ENCODE measurements at regions of chr12 and their contacts with region 1.

Region 1: DNA sequence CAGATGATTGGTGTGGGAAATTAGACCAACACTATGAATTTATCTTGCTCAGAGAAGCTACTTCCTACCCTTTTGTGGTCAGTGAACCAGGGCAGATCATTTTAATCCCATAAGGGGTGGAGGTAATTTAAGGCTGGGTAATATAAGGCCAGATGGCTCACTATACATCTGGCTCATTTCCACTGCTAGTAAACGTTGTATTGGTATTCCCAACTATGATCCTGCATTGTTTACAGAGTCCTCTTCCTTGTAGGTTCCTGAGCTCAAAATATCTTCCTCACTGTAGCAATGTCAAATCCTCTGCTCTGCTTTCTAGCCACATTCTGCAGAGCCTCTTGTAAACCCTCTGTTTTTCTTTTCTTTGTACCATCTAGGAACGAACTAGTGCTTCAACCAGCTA is 93.0 kb upstream of the MGAT4C start:
- DNase-seq: no peak
- H3K4me3 ChIP-seq: no peak overlapping the region
- H3K27ac ChIP-seq: no peak overlapping the region
- H3K4me1 ChIP-seq: no peaks in the 10 kb centered on the region
- H3K27me3 ChIP-seq: no peaks in the 10 kb centered on the region
- CTCF ChIP-seq: no peak

Region 2: GRCh38 chr12:86091681-86092080 is 257.5 kb before region 1 on chr12:
- dilution Hi-C with region 1: no loop called
- DNase-seq: no peak
- H3K4me3 ChIP-seq: no peak overlapping the region
- H3K27ac ChIP-seq: no peak overlapping the region
- H3K4me1 ChIP-seq: no peaks in the 10 kb centered on the region
- H3K27me3 ChIP-seq: no peaks in the 10 kb centered on the region
- CTCF ChIP-seq: no peak

Region 3: GRCh38 chr12:86104087-86104486 is 245.1 kb before region 1 on chr12:
- dilution Hi-C with region 1: no loop called
- DNase-seq: no peak
- H3K4me3 ChIP-seq: no peak overlapping the region
- H3K27ac ChIP-seq: no peak overlapping the region
- H3K4me1 ChIP-seq: peaks cover 3% of the 10 kb centered on the region
- H3K27me3 ChIP-seq: no peaks in the 10 kb centered on the region
- CTCF ChIP-seq: no peak

Region 4: DNA sequence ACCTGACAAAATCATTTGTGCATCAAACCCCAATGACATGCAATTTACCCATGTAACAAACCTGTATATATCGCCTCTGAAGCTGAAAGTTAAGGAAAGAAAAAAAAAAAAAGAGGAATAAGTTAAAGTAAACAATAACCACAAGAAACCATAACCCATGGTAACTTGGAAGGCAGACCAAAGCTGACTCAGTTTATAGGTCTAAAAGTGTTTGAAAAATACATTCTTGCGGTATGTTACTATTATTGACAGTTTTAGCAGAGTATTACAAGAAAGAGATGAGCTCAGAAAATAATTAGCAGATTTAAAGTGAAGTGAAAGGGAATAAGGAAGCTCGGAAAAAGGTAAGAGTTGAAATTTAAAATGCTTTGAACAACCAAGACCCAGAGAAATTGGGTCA is 58.6 kb before region 1 on chr12:
- dilution Hi-C with region 1: loop called (anchors 5 kb)
- DNase-seq: no peak
- H3K4me3 ChIP-seq: no peak overlapping the region
- H3K27ac ChIP-seq: no peak overlapping the region
- H3K4me1 ChIP-seq: no peaks in the 10 kb centered on the region
- H3K27me3 ChIP-seq: no peaks in the 10 kb centered on the region
- CTCF ChIP-seq: no peak

Measured in keratinocyte (primary cell).